ENCODE measurements at regions of chr7 and their contacts with region 1.

Region 1: DNA sequence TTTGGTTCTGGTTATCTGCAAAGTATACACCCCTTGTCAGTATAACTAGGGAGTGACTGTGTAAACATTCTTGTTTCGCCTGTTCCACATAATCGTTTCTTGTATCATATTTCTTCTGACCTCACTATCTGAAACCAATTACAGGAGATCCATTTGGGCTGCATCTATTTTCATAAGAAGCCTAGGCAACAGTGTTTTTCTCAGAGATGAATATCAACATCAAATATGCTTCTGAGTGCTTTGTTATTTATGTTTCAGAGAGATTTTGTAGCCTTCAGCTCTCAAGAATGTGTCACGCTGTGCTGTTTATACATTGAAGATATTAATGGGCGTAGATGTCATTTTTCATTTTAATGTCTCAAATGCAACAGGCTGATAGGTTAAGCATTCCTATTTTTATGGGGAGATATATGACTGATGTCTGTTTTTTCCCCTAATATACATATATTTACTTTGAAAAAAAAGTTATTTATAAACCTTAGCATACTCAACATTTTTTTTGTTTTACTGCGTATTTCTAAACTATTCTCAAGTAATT is 115.5 kb downstream of the FOXP2 start:
- DNase-seq: no peak
- H3K4me3 ChIP-seq: no peak overlapping the region
- H3K27ac ChIP-seq: no peak overlapping the region
- H3K4me1 ChIP-seq: peaks cover 0 to 17% (median 0%) of the 10 kb centered on the region in 4 donors
- H3K27me3 ChIP-seq: no peaks in the 10 kb centered on the region
- CTCF ChIP-seq: no peak

Region 2: GRCh38 chr7:115471891-115472290 is 941.7 kb after region 1 on chr7:
- intact Hi-C with region 1: loop called (anchors 5 kb)
- DNase-seq: no peak
- H3K4me3 ChIP-seq: no peak overlapping the region
- H3K27ac ChIP-seq: no peak overlapping the region
- H3K4me1 ChIP-seq: peaks cover 0 to 8% (median 2%) of the 10 kb centered on the region in 4 donors
- H3K27me3 ChIP-seq: peaks cover 0 to 3% of the 10 kb centered on the region in 2 donors
- CTCF ChIP-seq: no peak